ENCODE measurements at regions of chr1 and their contacts with region 1.

Region 1: DNA sequence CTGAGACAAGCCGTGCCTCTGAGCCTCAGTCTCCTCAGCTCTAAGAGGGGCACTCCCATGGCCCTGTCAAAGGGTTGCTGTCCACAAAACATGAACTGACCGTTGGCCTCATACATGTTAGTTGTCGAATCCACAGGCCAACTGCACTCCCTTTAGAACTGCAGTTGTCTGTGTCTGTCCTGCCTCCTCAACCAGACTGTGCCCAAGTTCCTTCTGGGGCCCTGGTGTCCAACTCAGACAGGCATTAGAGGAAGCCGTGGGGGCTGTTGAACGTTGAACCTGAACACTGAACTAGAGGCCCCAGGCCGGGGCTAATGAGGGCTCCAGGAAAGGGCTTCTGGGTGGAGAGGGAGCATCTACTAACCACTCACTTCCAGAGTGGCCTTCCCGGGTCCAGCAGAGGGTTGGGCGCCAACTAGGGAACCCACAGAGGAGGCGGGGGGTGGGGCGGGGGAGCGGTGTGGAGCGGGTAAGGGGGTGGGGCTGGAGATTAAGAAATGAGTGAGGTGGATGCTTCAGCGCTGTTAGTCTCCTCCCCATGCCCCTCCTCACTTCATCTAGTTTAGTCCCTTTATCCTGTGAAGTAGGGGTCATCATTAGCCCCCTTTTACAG is at the start of gene RAB42:
- DNase-seq: peak; percentile 80 to 85
- ATAC-seq: peak; percentile 72
- H3K4me3 ChIP-seq: peak within 1 kb of the TSS; percentile 53 to 67
- H3K27ac ChIP-seq: no peak within 1 kb of the TSS
- H3K4me1 ChIP-seq: no peaks in the 10 kb centered on the region
- H3K27me3 ChIP-seq: no peaks in the 10 kb centered on the region
- total RNA-seq, gene RAB42: 2.0 to 4.3 TPM

Region 2: GRCh38 chr1:28359592-28360239 is 232.1 kb before region 1 on chr1:
- intact Hi-C with region 1: loop called in 1 of 2 experiments (anchors 10 kb)
- DNase-seq: peak; percentile 75 to 92
- ATAC-seq: no peak
- H3K4me3 ChIP-seq: no peak overlapping the region
- H3K27ac ChIP-seq: no peak overlapping the region
- H3K4me1 ChIP-seq: no peaks in the 10 kb centered on the region
- H3K27me3 ChIP-seq: no peaks in the 10 kb centered on the region

Region 3: DNA sequence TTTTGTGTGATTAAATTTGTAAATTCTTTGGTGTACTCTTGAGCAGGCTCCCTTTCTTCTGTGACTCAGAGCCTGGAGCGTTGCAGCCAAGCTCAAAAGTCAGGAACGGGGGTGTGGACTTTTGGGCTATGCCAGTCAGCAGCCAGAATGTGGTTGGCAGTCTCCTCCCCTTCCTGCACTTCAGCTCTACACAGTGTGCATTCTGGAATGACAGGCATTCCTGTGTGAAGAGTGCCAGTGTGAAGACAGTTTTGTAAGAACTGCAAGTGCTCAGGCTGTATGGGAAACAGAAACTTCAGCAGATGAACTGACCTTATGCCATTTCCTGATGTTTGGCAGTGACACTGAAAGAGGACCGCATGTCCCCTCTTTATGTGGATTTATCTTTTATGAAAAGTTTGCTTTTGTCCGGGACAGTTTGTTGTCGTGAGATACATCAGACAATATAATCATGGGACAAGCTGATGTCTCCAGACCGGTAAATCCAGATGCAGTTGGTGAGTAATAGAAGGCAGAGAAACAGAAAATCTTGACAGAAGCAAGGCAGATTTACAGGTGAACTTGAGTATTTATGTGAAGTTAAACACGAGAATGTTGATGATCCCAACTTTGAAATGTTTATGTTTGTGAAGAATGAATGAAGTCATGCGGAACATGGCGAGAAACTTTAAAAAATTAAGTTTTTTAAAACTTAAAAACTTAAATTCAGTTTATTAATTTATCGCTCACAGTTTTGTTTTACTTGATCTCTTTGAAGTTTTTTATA is 153.7 kb before region 1 on chr1:
- intact Hi-C with region 1: no loop called
- DNase-seq: peak; percentile 90 to 92
- ATAC-seq: peak; percentile 95
- H3K4me3 ChIP-seq: peak overlapping the region in 1 of 2 donors; percentile 18
- H3K27ac ChIP-seq: peak overlapping the region in 1 of 2 donors; percentile 64
- H3K4me1 ChIP-seq: peaks cover 0 to 5% of the 10 kb centered on the region in 2 donors
- H3K27me3 ChIP-seq: no peaks in the 10 kb centered on the region

Region 4: GRCh38 chr1:28581536-28582247 is 10.1 kb before region 1 on chr1:
- intact Hi-C with region 1: no loop called
- DNase-seq: peak; percentile 98
- ATAC-seq: peak; percentile 99
- H3K4me3 ChIP-seq: peak overlapping the region; percentile 62 to 83
- H3K27ac ChIP-seq: peak overlapping the region in 1 of 2 donors; percentile 87
- H3K4me1 ChIP-seq: peaks cover 0 to 4% of the 10 kb centered on the region in 2 donors
- H3K27me3 ChIP-seq: peaks cover 0 to 1% of the 10 kb centered on the region in 2 donors

Region 5: DNA sequence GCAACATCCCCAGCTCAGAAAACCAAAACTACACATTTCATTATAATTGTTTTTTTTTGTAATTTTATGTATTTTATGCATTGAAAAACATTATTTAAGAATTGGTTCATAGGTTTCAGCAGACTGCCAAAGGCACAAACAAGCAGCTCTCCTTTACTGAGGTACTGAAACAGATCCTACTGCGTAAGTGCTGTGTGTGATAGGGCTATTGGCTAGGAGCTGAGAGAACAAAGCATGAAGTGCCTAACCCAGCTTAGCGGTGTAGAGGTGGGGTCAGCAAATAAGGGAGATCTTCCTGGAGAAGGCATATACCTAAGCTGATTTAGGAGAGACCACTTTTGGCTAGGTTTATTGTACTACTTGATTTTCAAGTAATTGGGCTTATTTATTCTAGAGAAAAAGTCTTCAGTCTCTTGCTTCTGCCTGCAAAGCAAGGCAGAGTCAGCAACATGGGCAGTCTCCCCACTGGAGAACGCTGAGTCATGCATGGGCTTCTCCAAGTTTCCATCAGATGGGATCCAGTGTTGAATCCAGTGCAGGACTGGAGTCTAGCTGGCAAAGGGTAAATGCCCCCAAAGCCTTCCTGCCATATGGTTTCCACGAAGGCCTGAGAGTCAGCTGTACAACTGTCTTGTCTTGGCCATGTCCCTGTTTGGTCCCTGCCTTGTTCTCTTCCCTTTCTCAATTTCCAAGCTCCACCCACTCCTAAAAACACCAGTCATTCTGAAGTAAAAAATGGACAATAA is 126.9 kb after region 1 on chr1:
- intact Hi-C with region 1: no loop called
- DNase-seq: peak in 1 of 2 donors; percentile 60
- ATAC-seq: peak; percentile 60
- H3K4me3 ChIP-seq: no peak overlapping the region
- H3K27ac ChIP-seq: no peak overlapping the region
- H3K4me1 ChIP-seq: peaks cover 0 to 1% of the 10 kb centered on the region in 2 donors
- H3K27me3 ChIP-seq: no peaks in the 10 kb centered on the region